ENCODE measurements at regions of chr3 and their contacts with region 1.

Region 1: DNA sequence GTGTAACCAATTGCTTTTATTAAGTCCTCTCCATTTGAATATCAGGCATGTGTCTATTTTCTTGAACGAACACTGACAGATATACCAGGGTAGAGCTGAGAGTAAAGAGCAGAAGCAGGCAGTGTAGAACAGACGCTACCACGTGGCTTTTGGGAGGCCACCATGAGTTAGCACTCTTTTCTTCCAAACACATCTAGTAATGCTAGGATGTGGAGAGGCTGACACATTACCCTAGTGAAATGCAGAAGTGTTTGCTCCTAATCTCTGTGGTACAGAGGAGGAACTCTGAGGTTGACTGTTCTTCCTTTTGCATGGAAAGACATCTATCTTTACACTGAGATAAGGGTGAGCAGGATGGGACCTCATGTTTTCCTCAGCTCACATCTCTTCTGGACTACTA is 216.3 kb downstream of the SATB1 start:
- DNase-seq: no peak
- H3K4me3 Mint-ChIP-seq: no peak overlapping the region
- H3K27ac Mint-ChIP-seq: peak overlapping the region; percentile 50
- H3K4me1 Mint-ChIP-seq: peaks cover 44% of the 10 kb centered on the region
- H3K27me3 Mint-ChIP-seq: no peaks in the 10 kb centered on the region

Region 2: DNA sequence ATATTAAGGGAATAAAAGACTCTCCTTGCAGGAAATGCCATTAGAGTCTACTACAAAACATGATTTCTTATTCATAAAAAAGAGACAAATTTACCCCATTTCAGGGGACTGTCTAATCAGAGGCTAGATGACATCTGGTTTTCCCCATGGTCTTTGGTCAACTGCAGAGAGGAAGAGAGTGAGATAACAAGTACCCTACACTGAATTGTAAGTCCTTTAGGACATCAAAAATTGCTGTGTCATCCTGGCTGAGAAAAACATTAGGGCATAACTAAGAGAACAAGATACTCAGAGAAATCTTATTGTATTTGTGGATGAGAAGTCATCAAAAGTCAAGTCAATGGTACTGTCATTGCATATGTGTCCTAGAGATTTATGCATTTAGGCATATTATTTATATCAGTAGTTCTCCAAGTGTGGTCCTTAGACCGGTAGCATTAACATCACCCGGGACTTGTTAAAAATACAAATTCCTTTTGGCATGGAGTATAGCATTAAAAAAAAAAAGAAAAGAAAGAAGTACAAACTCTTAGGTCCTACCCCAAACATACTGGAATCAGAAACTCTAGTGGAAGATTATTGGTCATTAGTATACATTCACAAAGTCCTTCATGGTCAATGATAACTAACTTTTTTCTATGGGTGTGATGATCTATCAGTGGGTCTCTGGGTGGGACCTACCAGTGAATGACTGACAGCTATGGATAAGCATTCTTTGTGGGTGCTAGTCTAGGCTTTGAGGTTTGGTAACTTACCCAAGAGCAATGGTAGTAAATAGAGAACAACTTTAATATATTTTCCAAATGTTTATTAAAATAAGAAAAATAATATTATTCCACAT is 437.5 kb before region 1 on chr3:
- intact Hi-C with region 1: loop called (anchors 5 kb)
- DNase-seq: no peak
- H3K4me3 Mint-ChIP-seq: no peak overlapping the region
- H3K27ac Mint-ChIP-seq: no peak overlapping the region
- H3K4me1 Mint-ChIP-seq: peaks cover 24% of the 10 kb centered on the region
- H3K27me3 Mint-ChIP-seq: peaks cover 26% of the 10 kb centered on the region

Region 3: DNA sequence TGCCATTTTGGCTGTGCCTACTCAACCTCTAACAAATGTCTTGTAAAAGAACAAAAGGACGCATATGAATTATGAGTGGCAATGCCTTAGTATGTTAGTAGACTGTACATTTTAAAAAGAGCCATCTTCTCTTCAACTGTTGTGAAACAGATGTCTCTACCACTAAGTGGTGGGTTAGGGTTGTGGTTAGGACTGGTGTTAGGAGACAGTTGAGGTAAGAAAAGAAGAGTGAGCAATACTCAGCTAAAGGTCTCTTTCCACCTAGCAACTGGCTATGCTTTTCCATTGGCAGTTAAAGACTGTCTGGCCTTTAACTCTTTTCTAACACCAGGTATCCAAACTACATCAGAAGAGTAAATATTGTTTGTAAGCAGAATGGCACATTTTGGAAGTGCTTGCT is 244.7 kb before region 1 on chr3:
- intact Hi-C with region 1: loop called (anchors 1 kb)
- DNase-seq: no peak
- H3K4me3 Mint-ChIP-seq: no peak overlapping the region
- H3K27ac Mint-ChIP-seq: peak overlapping the region; percentile 54
- H3K4me1 Mint-ChIP-seq: peaks cover 11% of the 10 kb centered on the region
- H3K27me3 Mint-ChIP-seq: peaks cover 2% of the 10 kb centered on the region

Region 4: DNA sequence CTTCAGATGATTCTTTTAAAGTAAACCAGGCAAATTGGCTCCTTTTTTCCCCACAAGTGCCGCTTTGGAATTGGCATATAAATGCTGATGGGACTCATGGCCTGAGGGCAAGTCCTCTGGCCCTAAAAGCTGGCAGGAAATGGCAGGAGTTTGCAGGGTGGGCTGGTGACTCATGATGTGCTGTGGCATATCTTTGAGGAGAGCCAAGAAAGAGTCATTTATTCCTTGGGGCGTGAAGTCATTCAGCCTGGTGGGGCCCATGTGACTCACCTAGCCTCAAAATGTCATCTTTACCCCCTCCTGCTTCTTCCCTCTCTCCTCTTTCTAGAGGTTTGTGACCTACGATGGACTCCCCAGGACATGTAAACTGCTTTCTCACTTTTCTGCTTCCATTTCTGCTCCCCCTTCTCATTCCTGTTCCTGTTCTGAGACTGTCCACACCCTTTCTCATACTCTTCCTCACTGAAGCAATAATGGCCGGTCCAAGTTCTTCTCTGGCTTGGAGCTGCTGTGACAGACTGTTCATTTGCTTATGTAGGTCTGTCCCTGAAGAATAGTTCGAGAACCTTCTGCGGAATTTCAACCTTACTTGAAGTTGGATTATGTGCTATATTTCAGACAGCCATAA is 109.8 kb before region 1 on chr3:
- intact Hi-C with region 1: loop called (anchors 1 kb)
- DNase-seq: no peak
- H3K4me3 Mint-ChIP-seq: no peak overlapping the region
- H3K27ac Mint-ChIP-seq: peak overlapping the region; percentile 95
- H3K4me1 Mint-ChIP-seq: peaks cover 27% of the 10 kb centered on the region
- H3K27me3 Mint-ChIP-seq: no peaks in the 10 kb centered on the region

Region 5: DNA sequence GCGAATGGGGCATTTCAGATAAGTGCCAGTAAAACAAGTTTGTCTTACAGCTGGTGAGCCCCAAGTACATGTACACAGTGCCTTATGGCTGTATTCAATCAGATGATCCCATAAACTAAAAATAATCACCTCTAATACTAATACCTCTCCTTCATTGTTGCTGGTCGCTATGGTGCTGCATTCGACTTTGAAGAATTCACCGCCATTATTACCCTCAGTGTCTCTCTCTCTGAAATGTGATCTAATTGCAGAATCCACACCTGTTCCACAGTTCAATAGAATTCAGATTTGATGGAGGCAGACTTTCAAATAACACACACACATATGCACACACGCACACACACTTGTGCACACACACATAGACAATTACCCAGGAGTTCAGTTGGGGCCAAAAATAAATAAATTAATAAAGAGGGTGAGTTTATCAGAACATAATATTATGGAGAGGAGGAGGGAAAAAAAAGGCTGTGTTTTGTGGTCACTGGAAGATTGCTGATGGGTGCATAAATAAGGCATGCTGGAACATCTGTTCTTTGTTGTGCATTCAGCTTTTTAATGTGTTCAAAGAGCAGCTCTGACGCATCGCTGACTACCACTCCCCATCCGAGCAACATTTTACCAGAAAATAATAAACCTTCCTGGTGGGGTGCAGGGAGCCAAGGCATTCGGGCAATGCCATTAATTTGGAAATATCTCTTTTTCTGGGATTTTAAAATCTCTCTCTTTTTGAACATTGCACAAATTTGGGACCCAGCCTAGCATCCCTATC is 19.4 kb before region 1 on chr3:
- intact Hi-C with region 1: no loop called
- DNase-seq: no peak
- H3K4me3 Mint-ChIP-seq: no peak overlapping the region
- H3K27ac Mint-ChIP-seq: no peak overlapping the region
- H3K4me1 Mint-ChIP-seq: no peaks in the 10 kb centered on the region
- H3K27me3 Mint-ChIP-seq: peaks cover 11% of the 10 kb centered on the region

Region 6: DNA sequence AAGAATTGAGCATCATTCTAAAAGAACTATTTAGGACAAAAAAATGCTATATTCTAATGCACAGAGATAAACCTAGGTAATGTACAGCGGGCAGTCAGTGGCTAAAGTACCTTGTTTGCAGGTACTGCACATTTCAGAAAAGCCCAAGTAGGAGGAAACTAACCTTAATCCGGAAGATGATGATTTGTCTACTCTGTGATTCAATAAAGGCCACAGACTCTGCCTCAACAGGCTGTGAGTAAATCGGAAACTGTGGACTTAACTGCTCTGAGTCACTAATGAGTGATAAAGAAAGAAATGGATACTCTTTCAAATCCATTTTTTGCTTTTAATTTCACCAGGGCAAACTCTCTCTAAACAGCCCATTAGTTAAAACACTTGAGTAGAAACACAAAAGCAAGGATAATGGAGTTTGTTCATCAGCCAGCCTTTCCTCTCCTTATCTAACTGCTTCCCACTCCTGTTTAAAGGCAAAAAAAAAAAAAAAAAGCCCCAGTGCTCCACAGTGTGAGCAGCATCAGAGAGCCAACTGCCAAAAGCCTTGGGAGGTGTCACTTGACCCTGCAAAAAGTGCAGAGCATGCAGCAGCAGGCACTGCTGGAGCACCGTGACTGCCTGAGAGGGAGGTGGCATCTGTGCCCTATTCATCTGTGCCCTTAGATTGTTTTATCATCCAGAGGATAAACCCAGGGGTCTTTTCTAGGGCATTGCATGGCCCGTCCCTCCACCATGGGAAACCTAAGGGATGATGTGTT is 28.6 kb after region 1 on chr3:
- intact Hi-C with region 1: loop called (anchors 1 kb)
- DNase-seq: no peak
- H3K4me3 Mint-ChIP-seq: no peak overlapping the region
- H3K27ac Mint-ChIP-seq: peak overlapping the region; percentile 40
- H3K4me1 Mint-ChIP-seq: peaks cover 22% of the 10 kb centered on the region
- H3K27me3 Mint-ChIP-seq: peaks cover 18% of the 10 kb centered on the region

Region 7: DNA sequence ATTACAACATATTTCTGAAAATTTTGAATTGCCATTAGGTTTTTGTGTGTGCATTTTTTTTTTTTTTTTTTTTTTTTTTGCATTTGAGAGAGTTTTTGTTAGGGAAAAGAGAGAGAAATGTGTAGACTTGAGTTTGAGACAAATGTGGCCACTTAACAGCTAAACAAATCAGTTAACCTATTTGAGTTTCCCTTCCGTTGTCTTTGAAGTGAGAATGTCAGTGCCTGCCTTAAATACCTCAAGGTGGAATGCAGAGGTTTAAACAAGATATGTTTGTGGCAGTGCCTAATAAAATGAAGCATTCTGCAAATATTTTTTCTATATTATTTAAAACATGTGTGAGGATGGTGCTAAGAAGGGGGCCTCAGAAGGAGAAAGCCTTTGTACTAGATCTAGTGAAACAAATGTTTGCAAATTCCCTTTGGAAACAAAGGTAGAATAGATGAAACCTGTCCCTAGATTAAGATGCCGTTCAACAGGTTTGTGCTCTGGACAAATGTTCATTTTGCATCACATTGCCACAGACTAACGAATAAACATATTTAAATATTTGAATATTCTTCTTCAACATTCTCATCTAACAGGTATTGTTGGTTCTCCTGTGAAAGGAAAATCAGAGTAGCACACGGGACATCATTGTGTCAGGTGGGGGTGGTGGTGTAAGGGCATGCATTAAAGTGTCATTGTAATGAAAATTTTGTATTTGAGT is 135.6 kb after region 1 on chr3:
- intact Hi-C with region 1: loop called (anchors 10 kb)
- DNase-seq: no peak
- H3K4me3 Mint-ChIP-seq: no peak overlapping the region
- H3K27ac Mint-ChIP-seq: no peak overlapping the region
- H3K4me1 Mint-ChIP-seq: peaks cover 21% of the 10 kb centered on the region
- H3K27me3 Mint-ChIP-seq: peaks cover 20% of the 10 kb centered on the region

Region 8: DNA sequence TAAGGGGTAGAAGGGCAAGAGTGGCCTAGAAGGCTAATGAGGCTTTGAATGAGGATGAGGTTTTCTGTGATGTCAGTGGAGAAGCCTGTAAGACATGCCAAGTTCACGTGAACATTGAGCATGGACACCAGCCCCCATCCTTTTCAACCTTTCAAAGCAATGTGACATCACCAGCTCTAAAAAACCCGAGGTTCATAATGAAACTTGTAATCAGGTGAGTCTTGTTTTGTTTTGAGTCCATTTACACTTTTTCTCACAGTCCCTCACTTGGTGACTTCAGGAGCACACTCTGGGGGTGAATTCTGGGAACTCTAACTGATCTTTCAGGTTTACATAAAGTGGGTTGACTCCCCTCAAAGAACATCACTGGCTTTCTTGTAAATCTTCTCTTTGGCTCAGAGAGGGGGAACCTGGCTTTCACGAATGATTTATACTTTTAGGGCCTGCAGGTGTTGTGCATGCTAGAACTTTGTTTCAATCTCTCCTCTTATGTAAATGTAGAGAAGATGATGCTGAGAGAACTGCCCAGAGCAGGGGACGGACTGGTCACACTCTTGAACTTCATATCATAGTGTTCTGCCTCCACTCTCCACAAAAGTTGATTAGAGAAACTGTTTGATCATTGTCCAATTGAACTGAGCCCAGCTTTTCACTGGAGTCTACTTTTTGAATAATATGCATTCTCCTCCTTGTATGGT is 441.0 kb after region 1 on chr3:
- intact Hi-C with region 1: loop called (anchors 10 kb)
- DNase-seq: peak; percentile 49
- H3K4me3 Mint-ChIP-seq: peak overlapping the region; percentile 14
- H3K27ac Mint-ChIP-seq: peak overlapping the region; percentile 93
- H3K4me1 Mint-ChIP-seq: peaks cover 84% of the 10 kb centered on the region
- H3K27me3 Mint-ChIP-seq: no peaks in the 10 kb centered on the region

Measured in activated T-helper 2 cell treated with anti-CD3 and anti-CD28 coated beads, Interferon-gamma antibody, Interleukin-2, Interleukin-4, amounts not matched to agents 10 μg/mL and 5 μg/mL and 100 μg/mL, durations not matched to agents 14 hours and 24 hours and 36 hours (primary cell).